H1 (cell line): ENCODE measurements at regions of chr10 and their contacts with region 1.

Region 1: DNA sequence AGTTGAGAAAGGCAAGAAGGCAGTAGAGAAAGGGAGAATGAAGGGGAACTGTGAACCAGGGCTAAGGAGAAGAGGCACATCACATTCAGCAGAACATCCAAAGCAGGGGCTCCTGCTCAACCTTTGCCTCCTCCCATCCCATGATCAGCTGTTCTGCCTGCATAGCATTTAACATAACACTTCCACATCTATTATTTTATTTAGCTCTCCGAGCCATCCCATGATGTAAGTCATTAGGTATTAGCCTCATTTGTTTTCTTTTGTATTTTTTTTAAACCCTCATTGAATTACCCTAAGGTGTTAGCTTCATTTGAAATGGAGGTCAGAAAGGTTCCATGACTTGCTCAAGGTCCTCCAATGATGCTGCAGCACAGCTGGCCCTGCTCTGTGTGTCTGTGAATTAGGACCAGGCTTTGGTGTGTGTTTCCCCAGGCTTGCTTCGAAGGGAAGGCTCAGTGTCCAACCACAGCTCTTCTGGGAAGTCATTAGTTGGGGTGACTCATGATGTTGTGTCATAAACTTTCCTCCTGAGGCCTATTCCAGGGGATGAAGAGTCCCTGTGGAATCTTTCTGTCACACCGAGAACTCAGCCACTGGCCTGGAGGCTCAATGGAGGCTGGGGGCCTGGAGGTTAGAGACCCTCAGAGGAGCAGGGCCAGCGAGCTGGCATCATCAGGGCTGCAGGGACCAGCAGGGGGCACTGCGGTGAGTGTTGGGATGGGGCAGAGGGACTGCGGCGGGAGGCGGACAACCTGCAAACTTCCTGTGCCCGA is 16.5 kb downstream of the NPFFR1 start:
- DNase-seq: peak in 1 of 2 experiments; percentile 89
- H3K4me3 ChIP-seq: no peak overlapping the region
- H3K27ac ChIP-seq: no peak overlapping the region
- H3K4me1 ChIP-seq: no peaks in the 10 kb centered on the region
- H3K27me3 ChIP-seq: no peaks in the 10 kb centered on the region
- CTCF ChIP-seq: peak; percentile 67 to 84 (median 79)
- EP300 ChIP-seq: no peak
- POLR2A ChIP-seq: no peak
- RAD21 ChIP-seq: peak; percentile 39 to 63; a peak in 3 of 4 replicates

Region 2: GRCh38 chr10:70227548-70228320 is 39.6 kb before region 1 on chr10:
- CTCF ChIA-PET with region 1: interaction called, 15 read pairs
- POLR2A ChIA-PET with region 1: no interaction called
- DNase-seq: no peak
- H3K4me3 ChIP-seq: no peak overlapping the region
- H3K27ac ChIP-seq: no peak overlapping the region
- H3K4me1 ChIP-seq: peaks cover 0 to 4% (median 2%) of the 10 kb centered on the region in 4 experiments; a peak in 4 of 7 replicates
- H3K27me3 ChIP-seq: peaks cover 0 to 4% (median 0%) of the 10 kb centered on the region in 4 experiments; a peak in 2 of 7 replicates
- CTCF ChIP-seq: no peak
- EP300 ChIP-seq: no peak
- POLR2A ChIP-seq: no peak
- RAD21 ChIP-seq: no peak

Region 3: GRCh38 chr10:70255329-70256299 is 11.7 kb before region 1 on chr10:
- CTCF ChIA-PET with region 1: interaction called, 26 read pairs
- POLR2A ChIA-PET with region 1: no interaction called
- DNase-seq: no peak
- H3K4me3 ChIP-seq: no peak overlapping the region
- H3K27ac ChIP-seq: no peak overlapping the region
- H3K4me1 ChIP-seq: peaks cover 0 to 2% (median 0%) of the 10 kb centered on the region in 4 experiments; a peak in 1 of 7 replicates
- H3K27me3 ChIP-seq: no peaks in the 10 kb centered on the region
- CTCF ChIP-seq: no peak
- EP300 ChIP-seq: no peak
- POLR2A ChIP-seq: no peak
- RAD21 ChIP-seq: no peak

Region 4: DNA sequence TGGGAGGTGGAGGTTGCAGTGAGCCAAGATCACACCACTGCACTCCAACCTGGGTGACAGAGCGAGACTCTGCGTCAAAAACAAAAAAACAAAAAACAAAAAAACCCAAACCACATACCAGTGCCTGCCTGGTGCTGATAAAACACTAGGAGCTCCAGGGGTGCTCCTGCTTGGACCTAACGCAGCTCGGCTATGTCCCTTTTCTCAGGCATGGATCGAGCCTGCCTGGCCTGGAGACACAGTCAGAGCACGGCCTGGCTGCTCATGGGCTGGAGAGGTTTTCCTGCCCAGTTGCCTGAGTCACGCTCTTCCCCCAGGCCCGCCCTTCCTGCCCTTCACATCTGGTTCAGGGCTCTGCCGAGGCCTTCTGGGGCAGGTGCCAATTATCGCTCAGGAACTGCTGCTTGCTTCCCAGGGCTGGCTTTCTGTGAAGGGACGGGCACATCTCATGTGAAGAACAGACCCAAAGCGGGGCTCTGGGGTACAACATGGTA is 29.1 kb after region 1 on chr10:
- CTCF ChIA-PET with region 1: interaction called, 20 read pairs
- POLR2A ChIA-PET with region 1: interaction called, 3 read pairs
- DNase-seq: no peak
- H3K4me3 ChIP-seq: no peak overlapping the region
- H3K27ac ChIP-seq: no peak overlapping the region
- H3K4me1 ChIP-seq: peaks cover 0 to 7% (median 2%) of the 10 kb centered on the region in 4 experiments; a peak in 4 of 7 replicates
- H3K27me3 ChIP-seq: no peaks in the 10 kb centered on the region
- CTCF ChIP-seq: no peak
- EP300 ChIP-seq: no peak
- POLR2A ChIP-seq: no peak
- RAD21 ChIP-seq: no peak

Region 5: DNA sequence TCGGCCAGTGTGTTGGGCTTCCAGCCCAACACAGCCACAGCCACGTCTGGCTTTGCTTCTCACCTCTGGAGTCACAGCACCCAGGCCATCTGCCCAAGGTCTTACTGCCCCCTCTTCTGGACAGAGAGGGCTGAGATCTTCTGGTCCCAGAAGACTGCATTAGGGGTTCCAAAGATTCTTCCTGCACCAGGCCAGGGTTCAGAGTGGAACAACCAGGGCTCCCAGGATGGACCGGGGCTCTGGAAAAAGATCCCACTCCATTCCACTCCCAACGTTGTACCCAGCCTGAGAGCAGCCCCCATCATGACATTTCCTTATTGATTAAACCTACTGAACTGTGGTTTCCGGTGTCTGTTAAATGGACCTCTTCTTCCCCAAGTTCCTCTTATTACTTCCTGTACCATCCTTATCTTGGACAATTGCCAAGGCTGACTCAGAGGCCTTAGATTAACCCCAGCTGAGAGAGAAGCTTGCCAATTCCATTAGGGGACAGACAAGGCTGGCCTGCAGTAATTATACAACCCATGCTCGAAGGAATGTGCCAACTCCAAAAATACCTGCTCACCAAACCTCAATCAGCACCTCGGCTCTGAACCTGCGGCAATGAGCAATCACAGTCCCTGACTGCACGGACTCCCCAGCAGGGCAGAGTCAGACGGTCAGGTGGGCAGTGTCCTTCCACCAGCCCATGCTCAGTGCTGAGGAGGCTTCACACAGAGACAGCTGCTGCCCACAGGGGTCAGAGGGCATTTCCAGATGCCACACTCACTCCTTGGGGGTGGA is 64.3 kb after region 1 on chr10:
- CTCF ChIA-PET with region 1: interaction called, 13 read pairs
- POLR2A ChIA-PET with region 1: no interaction called
- DNase-seq: no peak
- H3K4me3 ChIP-seq: no peak overlapping the region
- H3K27ac ChIP-seq: no peak overlapping the region
- H3K4me1 ChIP-seq: peaks cover 0 to 2% (median under 1%) of the 10 kb centered on the region in 4 experiments; a peak in 3 of 7 replicates
- H3K27me3 ChIP-seq: no peaks in the 10 kb centered on the region
- CTCF ChIP-seq: peak; percentile 31 to 50 (median 37)
- EP300 ChIP-seq: no peak
- POLR2A ChIP-seq: no peak
- RAD21 ChIP-seq: peak; percentile 57 to 76